Vagina (tissue), 2 donors: ENCODE measurements at regions of chr2 and their contacts with region 1.

Region 1: DNA sequence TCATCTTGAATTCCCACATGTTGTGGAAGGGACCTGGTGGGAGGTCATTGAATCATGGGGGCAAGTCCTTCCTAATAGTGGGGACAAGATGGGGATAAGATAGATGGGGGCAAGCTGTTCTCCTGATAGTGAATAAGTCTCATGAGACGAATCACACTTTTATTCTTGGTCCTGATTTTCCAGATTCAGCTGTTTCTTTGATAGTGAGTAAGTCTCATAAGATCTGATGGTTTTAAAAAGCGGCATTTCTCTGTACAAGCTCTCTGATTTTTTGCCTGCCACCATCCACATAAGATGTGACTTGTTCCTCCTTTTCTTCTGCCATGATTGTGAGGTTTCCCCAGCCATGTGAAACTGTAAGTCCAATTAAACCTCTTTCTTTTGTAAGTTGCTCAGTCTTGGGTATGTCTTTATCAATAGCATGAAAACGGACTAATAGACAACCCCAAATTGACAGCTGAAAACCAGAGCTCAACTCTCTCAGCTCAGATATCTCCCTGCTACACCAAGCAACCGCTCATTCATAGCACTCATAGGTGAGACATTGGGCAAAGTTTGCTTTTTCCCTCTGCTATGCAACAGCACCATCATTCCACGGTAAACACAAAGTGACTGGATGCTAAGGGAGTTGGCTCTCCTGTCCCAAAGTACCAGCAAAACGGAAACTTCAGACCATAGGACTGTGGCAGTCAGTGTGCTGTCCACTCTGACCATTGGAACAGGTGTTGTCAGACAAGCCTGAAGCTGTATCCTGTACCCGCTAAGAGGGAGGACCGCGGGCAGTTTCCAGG is 44.9 kb upstream of the TBC1D8 start:
- DNase-seq: no peak
- H3K4me3 ChIP-seq: no peak overlapping the region
- H3K27ac ChIP-seq: no peak overlapping the region
- H3K4me1 ChIP-seq: peaks cover 4% of the 10 kb centered on the region
- H3K27me3 ChIP-seq: no peaks in the 10 kb centered on the region
- CTCF ChIP-seq: no peak
- POLR2A ChIP-seq: no peak

Region 2: GRCh38 chr2:101179982-101180381 is 16.1 kb before region 1 on chr2:
- intact Hi-C with region 1: loop called (anchors 2 kb)
- DNase-seq: no peak
- H3K4me3 ChIP-seq: no peak overlapping the region
- H3K27ac ChIP-seq: no peak overlapping the region
- H3K4me1 ChIP-seq: peaks cover 18% of the 10 kb centered on the region
- H3K27me3 ChIP-seq: no peaks in the 10 kb centered on the region
- CTCF ChIP-seq: no peak
- POLR2A ChIP-seq: no peak

Region 3: DNA sequence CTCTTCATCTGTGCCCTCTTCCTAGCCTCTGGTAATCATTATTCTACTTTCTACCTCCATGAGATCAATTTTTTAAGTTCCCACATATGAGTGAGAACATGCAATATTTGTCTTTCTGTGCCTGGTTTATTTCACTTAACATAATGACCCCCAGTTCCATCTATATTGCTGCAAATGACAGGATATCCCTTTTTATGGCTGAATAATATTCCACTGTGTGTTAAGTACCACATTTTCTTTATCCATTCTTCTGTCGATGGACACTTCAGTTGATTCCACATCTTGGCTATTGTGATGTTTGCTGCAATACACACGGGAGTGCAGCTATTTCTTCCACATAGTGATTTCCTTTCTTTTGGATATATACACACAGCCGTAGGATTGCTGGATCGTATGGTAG is 12.8 kb after region 1 on chr2:
- intact Hi-C with region 1: no loop called
- DNase-seq: no peak
- H3K4me3 ChIP-seq: no peak overlapping the region
- H3K27ac ChIP-seq: no peak overlapping the region
- H3K4me1 ChIP-seq: no peaks in the 10 kb centered on the region
- H3K27me3 ChIP-seq: no peaks in the 10 kb centered on the region
- CTCF ChIP-seq: no peak
- POLR2A ChIP-seq: no peak